Activated T-helper 1 cell treated with anti-CD3 and anti-CD28 coated beads, Interleukin-12 subunit alpha, Interleukin-12 subunit beta, Interleukin-2, Interleukin-4 antibody, amounts not matched to agents 30 ng/mL and 10 ng/mL and 1 ng/mL, durations not matched to agents 14 hours and 24 hours and 36 hours (primary cell): ENCODE measurements at regions of chr17 and their contacts with region 1.

Region 1: DNA sequence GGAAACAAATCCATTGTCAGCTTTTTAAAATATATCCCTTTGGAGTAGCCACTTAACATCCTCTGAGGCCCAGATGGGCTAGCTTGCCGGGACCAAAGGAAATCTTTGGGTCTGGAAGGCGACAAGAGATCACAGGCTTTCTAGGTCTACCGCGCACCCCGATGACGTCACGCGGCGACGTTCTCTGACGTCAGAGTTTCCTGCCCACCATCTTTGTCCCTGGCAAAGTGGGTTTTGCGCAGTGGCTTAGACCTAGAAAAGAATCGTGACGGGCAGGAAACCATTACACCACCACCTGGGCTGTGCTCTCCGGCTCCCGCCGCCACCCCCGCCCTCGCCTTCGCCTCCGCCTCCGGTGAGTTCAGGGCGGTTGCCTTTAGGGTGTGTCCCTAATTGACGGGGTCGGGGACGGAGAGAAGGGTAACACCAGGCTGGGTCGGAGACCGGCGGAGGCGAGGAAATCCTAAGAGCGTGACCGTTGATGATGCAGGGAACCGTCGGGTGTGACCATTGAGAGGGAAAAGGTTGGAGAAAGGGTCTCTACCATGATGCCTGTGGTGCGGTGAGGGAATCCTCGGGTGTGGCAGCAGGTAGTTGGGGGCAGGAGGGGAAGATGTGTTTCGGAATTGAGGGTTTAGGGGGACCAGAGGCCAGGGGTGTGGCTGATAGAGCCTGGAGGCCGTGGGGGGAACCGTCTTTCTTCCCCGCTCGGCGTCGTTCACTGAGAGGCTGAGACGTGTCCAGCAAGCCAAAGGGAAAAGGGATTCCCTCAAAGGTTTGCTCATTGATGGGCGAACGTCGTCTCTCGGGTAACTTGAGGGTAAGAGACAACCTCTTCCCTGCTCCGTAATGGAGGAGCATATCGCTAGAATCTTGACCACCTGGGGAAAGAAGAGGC is at the start of gene AP2B1:
- DNase-seq: peak; percentile 96
- H3K4me3 Mint-ChIP-seq: peak within 1 kb of the TSS; percentile 94
- H3K27ac Mint-ChIP-seq: peak within 1 kb of the TSS; percentile 96
- H3K4me1 Mint-ChIP-seq: peaks cover 38% of the 10 kb centered on the region
- H3K27me3 Mint-ChIP-seq: peaks cover 3% of the 10 kb centered on the region
- total RNA-seq, gene AP2B1: 156 and 167 TPM in 2 replicates

Region 2: DNA sequence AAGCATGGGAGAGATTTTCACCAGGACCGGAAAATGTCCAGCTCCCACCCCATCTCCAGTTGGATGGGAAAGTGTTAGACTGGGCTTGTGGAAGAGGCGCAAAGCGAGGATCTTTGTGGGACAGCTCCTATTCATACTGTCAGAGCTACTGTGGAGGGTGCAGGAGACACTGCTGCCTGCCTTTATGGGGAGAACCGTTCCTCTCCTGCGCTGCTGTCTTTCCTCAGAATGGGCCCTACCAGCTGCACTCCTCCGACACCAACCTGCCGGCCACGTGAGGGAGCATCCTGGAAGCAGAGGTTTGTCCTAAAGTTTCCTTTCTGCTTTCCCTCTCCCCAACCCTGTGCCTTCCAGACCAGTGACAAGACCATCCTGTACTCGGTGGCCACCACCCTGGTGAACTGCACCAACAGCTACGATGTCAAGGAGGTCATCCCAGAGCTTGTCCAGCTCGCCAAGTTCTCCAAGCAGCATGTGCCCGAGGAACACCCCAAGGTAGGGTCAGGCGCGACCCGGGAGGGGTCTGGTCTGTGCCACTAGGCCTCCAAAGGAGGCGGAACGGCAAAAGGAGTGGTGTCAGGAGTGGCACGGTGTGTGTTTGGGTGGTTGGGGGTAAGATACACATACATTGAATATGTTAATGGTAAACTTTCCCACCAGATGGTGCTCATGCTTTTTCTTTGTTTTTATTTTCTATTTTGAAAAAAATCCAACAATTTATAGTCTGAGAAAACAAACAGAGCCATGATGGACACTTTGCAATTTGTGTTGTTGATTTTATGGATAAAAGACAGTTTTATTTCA is 416.2 kb before region 1 on chr17:
- intact Hi-C with region 1: loop called (anchors 5 kb)
- DNase-seq: peak; percentile 15
- H3K4me3 Mint-ChIP-seq: peak overlapping the region; percentile 5
- H3K27ac Mint-ChIP-seq: no peak overlapping the region
- H3K4me1 Mint-ChIP-seq: peaks cover 35% of the 10 kb centered on the region
- H3K27me3 Mint-ChIP-seq: peaks cover 7% of the 10 kb centered on the region

Region 3: DNA sequence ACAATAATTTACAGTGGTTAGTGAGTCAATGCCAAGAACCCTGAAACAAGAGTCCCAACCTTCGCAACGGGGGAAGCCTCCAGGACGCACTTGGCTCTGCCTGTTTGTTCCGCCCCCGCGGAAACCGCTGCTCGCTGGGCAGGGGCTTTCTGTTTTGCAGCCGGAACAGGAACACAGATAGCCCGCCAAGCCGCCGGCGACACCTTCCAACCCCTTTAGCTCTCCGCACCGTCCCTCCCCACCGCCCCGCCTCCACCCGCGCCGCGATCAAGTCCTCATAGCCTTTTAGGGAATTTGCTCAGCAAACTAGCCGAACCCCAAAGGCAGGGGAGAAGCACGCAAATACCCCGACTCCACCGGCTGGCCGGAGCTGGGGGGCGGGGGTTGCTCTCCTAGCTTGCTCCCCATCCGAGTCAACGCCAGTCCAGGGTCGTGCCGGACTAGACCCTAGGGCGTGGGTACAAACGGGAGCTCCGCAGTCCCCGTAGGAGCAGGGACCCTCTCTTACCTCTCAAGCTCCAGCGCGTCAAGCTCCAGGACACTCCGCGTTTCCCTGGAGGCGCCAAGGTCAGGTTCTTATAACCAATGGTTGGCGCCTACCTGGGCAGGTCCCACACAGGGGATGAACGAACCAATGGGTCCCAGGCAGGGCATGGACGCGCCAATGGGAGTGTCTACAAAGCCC is 139.0 kb before region 1 on chr17 and contains the start of gene SLFN13:
- intact Hi-C with region 1: loop called (anchors 1 kb)
- DNase-seq: peak; percentile 84
- H3K4me3 Mint-ChIP-seq: peak within 1 kb of the TSS; percentile 67
- H3K27ac Mint-ChIP-seq: peak within 1 kb of the TSS; percentile 66
- H3K4me1 Mint-ChIP-seq: peaks cover 27% of the 10 kb centered on the region
- H3K27me3 Mint-ChIP-seq: no peaks in the 10 kb centered on the region
- total RNA-seq, gene SLFN13: 32.2 and 32.7 TPM in 2 replicates

Region 4: GRCh38 chr17:35568541-35568940 is 18.8 kb before region 1 on chr17:
- intact Hi-C with region 1: loop called (anchors 1 kb)
- DNase-seq: no peak
- H3K4me3 Mint-ChIP-seq: peak overlapping the region; percentile 85
- H3K27ac Mint-ChIP-seq: peak overlapping the region; percentile 79
- H3K4me1 Mint-ChIP-seq: peaks cover 28% of the 10 kb centered on the region
- H3K27me3 Mint-ChIP-seq: peaks cover 8% of the 10 kb centered on the region

Region 5: GRCh38 chr17:35808962-35809854 is 221.9 kb after region 1 on chr17 and contains the start of gene TAF15:
- intact Hi-C with region 1: loop called (anchors 5 kb)
- DNase-seq: peak; percentile 95
- H3K4me3 Mint-ChIP-seq: peak within 1 kb of the TSS; percentile 98
- H3K27ac Mint-ChIP-seq: peak within 1 kb of the TSS; percentile 99
- H3K4me1 Mint-ChIP-seq: peaks cover 67% of the 10 kb centered on the region
- H3K27me3 Mint-ChIP-seq: no peaks in the 10 kb centered on the region
- total RNA-seq, gene TAF15: 311 and 322 TPM in 2 replicates